Dorsolateral prefrontal cortex (tissue), 120 donors: ENCODE measurements at regions of chr3 and their contacts with region 1.

Region 1: GRCh38 chr3:139329345-139329850 is 14.4 kb upstream of the MRPS22 start:
- DNase-seq: peak; percentile 67 to 92 (median 84)
- H3K4me3 ChIP-seq: peak overlapping the region in 55 of 59 donors; percentile 5 to 61 (median 35)
- H3K27ac ChIP-seq: peak overlapping the region in 11 of 59 donors; percentile 13 to 77 (median 53)
- H3K27me3 ChIP-seq: peaks cover 0 to 7% (median 0%) of the 10 kb centered on the region in 45 donors
- CTCF ChIP-seq: peak; percentile 91 to 100 (median 100)

Region 2: GRCh38 chr3:138608322-138609135 is 720.9 kb before region 1 on chr3 and contains the start of gene FAIM:
- intact Hi-C with region 1: loop called in 1 of 2 experiments (anchors 10 kb)
- DNase-seq: peak; percentile 47 to 79 (median 62)
- H3K4me3 ChIP-seq: peak within 1 kb of the TSS; percentile 44 to 91 (median 80)
- H3K27ac ChIP-seq: peak within 1 kb of the TSS; percentile 55 to 99 (median 94)
- H3K27me3 ChIP-seq: no peaks in the 10 kb centered on the region
- CTCF ChIP-seq: peak in 5 of 56 donors; percentile 9 to 26 (median 15)
- total RNA-seq, gene FAIM: 6.4 to 20.4 (median 11.4) TPM

Region 3: GRCh38 chr3:138694287-138695007 is 635.0 kb before region 1 on chr3:
- intact Hi-C with region 1: loop called in 1 of 2 experiments (anchors 5 kb)
- DNase-seq: no peak
- H3K4me3 ChIP-seq: no peak overlapping the region
- H3K27ac ChIP-seq: no peak overlapping the region
- H3K27me3 ChIP-seq: no peaks in the 10 kb centered on the region
- CTCF ChIP-seq: no peak

Region 4: DNA sequence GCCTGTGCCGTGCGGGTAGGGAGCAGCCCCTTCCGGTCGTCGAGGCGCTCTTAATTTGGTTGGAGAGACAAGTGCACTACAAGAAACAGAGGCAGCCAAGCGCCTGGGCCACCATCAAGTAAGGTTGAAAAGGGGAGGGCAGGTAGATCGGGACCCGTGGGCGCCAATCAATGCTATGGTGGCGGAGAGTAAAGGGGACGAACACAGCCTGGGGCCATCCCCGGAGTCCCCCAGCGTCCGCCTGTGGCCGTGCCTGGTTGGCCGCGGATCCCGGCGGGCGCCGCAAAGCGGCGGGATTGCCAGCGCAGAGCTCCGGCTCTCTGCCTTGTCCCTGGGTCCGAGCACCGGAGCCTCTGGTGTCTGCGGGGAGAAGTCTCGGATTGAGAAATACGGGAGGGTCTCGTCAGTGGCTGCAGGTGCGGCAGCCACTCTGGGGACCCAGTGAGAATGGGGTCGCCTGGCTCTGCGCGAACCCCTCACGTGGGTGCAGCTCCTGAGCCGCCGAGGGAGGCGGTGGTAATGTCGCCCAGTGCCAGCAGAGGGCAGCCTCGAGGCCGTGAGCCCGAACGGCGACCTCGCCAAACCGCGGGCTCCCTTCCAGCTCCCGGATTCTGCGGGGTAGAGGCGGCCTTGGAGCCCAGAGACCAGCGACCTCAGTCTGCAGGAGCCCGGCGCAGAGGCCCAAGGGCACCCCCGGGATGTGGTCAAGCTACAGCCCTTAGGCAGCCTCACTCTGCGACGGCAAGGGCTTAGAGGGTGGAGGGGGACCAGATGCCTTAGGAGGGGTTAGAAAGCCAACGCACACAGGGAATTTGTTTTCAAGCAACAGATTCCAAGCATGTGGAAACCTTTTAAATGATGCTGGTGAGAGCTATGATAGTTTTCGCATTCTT is 393.3 kb before region 1 on chr3:
- intact Hi-C with region 1: loop called (anchors 2 to 5 kb)
- DNase-seq: peak in 8 of 10 donors; percentile 39 to 77 (median 56)
- H3K4me3 ChIP-seq: peak overlapping the region in 58 of 59 donors; percentile 25 to 73 (median 51)
- H3K27ac ChIP-seq: peak overlapping the region in 1 of 59 donors; percentile 7
- H3K27me3 ChIP-seq: peaks cover 22 to 58% (median 52%) of the 10 kb centered on the region in 45 donors
- CTCF ChIP-seq: peak; percentile 65 to 96 (median 90)

Region 5: GRCh38 chr3:139187650-139188049 is 141.7 kb before region 1 on chr3:
- intact Hi-C with region 1: loop called in 1 of 2 experiments (anchors 10 kb)
- DNase-seq: no peak
- H3K4me3 ChIP-seq: no peak overlapping the region
- H3K27ac ChIP-seq: no peak overlapping the region
- H3K27me3 ChIP-seq: no peaks in the 10 kb centered on the region
- CTCF ChIP-seq: peak in 34 of 56 donors; percentile 10 to 66 (median 38)